ENCODE measurements at regions of chr10 and their contacts with region 1.

Region 1: DNA sequence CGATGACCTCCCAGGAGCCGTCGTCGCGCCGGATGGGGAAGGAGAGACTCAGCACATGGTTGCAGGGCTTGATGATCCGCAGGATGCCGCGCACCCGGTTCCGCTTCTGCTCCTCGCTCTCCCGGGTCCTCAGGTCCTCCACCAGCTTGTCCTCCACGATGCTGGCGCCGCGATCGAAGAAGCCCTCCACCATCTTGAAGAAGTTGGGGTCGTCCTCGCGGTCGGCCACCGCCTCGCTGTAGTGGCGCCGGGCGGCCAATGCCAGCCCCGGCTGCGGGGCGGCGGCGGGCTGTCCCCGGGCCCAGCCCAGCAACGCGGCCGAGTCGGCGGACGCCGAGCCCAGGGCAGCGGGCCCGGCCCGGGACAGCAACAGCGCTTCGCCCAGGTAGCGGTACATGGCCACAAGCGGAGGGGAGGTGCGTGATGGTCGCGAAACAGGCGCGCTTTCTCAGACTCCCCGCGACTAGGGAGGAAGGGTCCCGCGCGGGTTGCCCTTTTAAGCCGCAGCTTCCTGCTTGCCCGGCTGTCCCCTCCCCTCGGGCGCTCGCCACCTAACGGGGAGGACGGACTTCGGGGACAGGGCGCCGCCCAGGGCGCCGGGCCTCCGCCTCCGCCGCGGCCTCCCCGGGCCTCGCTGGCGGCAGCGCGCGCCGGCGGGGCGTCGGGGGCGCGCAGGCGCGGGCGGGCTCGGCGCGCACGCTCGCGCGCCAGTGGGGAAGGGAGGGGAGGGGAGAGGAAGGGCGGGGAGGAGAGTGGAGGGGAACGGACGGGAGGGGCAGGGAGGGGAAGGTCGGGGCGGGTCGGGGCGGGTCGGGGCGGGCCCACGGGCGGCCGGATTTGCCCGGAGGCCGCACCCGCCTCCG is at the starts of genes GLUD1 and SHLD2:
- DNase-seq: peak; percentile 88 to 89
- ATAC-seq: peak; percentile 83 to 87
- H3K4me3 ChIP-seq: peak within 1 kb of the TSS; percentile 82 to 94 (median 86)
- H3K27ac ChIP-seq: peak within 1 kb of the TSS; percentile 95 to 99 (median 97)
- H3K4me1 ChIP-seq: peaks cover 12 to 30% of the 10 kb centered on the region in 2 donors
- H3K27me3 ChIP-seq: no peaks in the 10 kb centered on the region
- CTCF ChIP-seq: peak in 1 of 5 experiments; percentile 19
- POLR2A ChIP-seq: peak; percentile 82 to 84
- total RNA-seq, gene GLUD1: 69.2 to 80.1 (median 77.2) TPM
- total RNA-seq, gene SHLD2: 7.2 to 15.2 (median 12.3) TPM

Region 2: DNA sequence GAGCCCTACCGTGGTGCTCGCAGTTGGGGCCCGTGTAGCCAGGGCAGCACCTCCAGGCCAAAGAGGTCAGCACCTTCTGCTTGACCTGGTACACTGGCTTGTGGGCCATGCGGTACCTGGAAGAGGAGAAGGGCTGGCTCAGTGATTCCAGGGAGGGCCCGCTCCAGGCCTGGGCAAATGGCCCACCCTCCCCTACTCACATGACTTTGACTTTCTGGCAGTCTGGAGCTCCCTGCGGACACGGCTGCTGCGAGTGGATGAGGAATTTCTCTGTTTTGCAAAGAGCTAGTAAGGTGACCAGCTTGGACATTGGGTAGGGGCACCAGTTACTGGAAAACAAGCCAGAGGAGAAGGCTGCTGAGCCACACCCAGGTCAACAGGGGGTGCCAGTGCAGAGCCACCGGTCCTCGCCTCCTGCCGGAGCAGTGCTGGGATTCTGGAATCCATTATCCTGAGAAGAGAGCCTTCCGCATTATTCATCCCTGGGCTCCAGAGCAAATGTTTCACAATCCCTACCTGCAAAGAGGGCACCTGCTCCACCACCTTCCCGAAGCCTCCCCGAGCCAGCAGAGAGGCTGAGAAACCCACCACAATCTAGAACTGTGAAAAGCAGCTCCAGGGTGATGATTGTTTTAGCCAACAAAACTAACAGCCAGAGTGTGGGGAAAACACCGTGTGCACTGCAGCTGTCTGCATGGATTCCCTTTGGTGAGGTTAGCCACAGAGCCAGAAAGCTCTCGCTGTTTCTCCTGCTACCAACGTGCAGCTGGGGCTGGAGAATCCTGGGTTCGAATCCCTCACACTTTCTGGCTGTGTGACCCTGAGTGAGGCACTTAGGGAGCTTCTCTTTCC is 149.0 kb before region 1 on chr10:
- in situ Hi-C with region 1: loop called in 1 of 4 experiments (anchors 25 kb)
- intact Hi-C with region 1: no loop called
- DNase-seq: peak in 1 of 2 donors; percentile 30
- ATAC-seq: peak; percentile 23 to 27
- H3K4me3 ChIP-seq: no peak overlapping the region
- H3K27ac ChIP-seq: no peak overlapping the region
- H3K4me1 ChIP-seq: peaks cover 26 to 32% of the 10 kb centered on the region in 2 donors
- H3K27me3 ChIP-seq: no peaks in the 10 kb centered on the region
- CTCF ChIP-seq: peak in 2 of 5 experiments; percentile 17 to 24
- POLR2A ChIP-seq: no peak

Region 3: GRCh38 chr10:86971232-86971991 is 123.2 kb before region 1 on chr10:
- in situ Hi-C with region 1: no loop called
- intact Hi-C with region 1: loop called (anchors 1 kb)
- DNase-seq: peak; percentile 75 to 85
- ATAC-seq: peak; percentile 71 to 76
- H3K4me3 ChIP-seq: peak overlapping the region; percentile 62 to 87 (median 74)
- H3K27ac ChIP-seq: peak overlapping the region; percentile 90 to 98 (median 96)
- H3K4me1 ChIP-seq: peaks cover 27 to 37% of the 10 kb centered on the region in 2 donors
- H3K27me3 ChIP-seq: no peaks in the 10 kb centered on the region
- CTCF ChIP-seq: no peak
- POLR2A ChIP-seq: peak in 1 of 2 donors; percentile 26